Heart right ventricle (tissue), 16 donors: ENCODE measurements at regions of chr5 and their contacts with region 1.

Region 1: DNA sequence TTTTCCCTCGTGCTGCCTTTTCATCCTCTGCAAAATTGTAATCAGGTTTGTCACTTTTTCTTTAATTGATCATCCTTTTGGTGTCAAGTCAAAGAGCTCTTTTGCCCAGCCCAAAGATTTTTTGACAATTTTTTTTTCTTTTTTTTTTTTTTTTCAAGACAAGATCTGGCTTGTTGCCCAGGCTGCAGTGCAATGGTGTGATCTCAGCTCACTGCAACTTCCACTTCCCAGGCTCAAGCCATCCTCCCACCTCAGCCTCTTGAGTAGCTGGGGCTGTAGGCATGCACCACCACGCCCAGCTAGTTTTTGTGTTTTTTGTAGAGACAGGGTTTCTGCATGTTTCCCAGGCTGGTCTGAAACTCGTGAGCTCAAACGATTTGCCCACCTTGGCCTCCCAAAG is 36.7 kb downstream of the CDK7 start:
- DNase-seq: peak in 1 of 2 donors; percentile 14
- ATAC-seq: peak in 1 of 8 donors; percentile 61
- H3K4me3 ChIP-seq: no peak overlapping the region
- H3K27ac ChIP-seq: no peak overlapping the region
- H3K4me1 ChIP-seq: peaks cover 0 to 9% (median 0%) of the 10 kb centered on the region in 9 donors
- H3K27me3 ChIP-seq: no peaks in the 10 kb centered on the region
- CTCF ChIP-seq: no peak

Region 2: GRCh38 chr5:69048230-69048629 is 223.1 kb before region 1 on chr5:
- intact Hi-C with region 1: no loop called
- DNase-seq: no peak
- ATAC-seq: no peak
- H3K4me3 ChIP-seq: no peak overlapping the region
- H3K27ac ChIP-seq: no peak overlapping the region
- H3K4me1 ChIP-seq: peaks cover 0 to 6% (median 0%) of the 10 kb centered on the region in 9 donors
- H3K27me3 ChIP-seq: no peaks in the 10 kb centered on the region
- CTCF ChIP-seq: peak in 4 of 9 donors; percentile 16 to 33 (median 28)

Region 3: GRCh38 chr5:69113851-69114250 is 157.5 kb before region 1 on chr5:
- intact Hi-C with region 1: loop called in 1 of 10 experiments (anchors 10 kb)
- DNase-seq: no peak
- ATAC-seq: no peak
- H3K4me3 ChIP-seq: no peak overlapping the region
- H3K27ac ChIP-seq: no peak overlapping the region
- H3K4me1 ChIP-seq: no peaks in the 10 kb centered on the region
- H3K27me3 ChIP-seq: no peaks in the 10 kb centered on the region
- CTCF ChIP-seq: no peak

Region 4: DNA sequence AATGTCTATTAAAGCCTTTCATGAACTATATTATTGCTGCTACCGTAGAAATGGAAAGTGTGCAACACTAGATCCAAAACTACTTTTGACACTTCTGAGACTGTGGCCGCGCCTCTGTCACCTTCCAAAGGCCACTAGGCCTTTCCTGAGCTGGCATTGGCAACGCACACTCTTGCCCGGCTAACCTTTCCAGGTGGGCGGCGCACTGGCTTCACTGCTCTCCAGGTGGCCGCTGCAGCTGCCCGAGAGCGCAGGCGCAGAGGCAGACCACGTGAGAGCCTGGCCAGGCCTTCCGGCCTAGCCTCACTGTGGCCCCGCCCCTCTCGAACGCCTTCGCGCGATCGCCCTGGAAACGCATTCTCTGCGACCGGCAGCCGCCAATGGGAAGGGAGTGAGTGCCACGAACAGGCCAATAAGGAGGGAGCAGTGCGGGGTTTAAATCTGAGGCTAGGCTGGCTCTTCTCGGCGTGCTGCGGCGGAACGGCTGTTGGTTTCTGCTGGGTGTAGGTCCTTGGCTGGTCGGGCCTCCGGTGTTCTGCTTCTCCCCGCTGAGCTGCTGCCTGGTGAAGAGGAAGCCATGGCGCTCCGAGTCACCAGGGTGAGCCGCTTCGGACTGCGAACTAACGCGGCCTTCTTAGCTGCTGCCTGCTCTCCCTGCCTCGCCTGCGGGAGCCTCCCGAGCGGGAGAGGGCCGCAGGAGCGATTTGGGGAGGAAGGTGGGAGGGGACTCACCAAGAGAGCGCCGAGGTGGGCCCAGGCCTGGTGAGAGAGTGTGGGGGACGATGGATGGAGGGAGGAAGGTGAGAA is 104.5 kb before region 1 on chr5 and contains the start of gene CCNB1:
- intact Hi-C with region 1: no loop called
- DNase-seq: peak; percentile 97 to 98
- ATAC-seq: peak; percentile 100
- H3K4me3 ChIP-seq: peak within 1 kb of the TSS; percentile 47 to 82 (median 68)
- H3K27ac ChIP-seq: peak within 1 kb of the TSS in 6 of 10 donors; percentile 23 to 67 (median 48)
- H3K4me1 ChIP-seq: peaks cover 3 to 24% (median 10%) of the 10 kb centered on the region in 9 donors
- H3K27me3 ChIP-seq: no peaks in the 10 kb centered on the region
- CTCF ChIP-seq: peak in 1 of 9 donors; percentile 28
- total RNA-seq, gene CCNB1: 2.2 to 17.6 (median 3.7) TPM